ENCODE measurements at regions of chr10 and their contacts with region 1.

Region 1: GRCh38 chr10:80459047-80459931 is 5.2 kb downstream of the TSPAN14 start:
- DNase-seq: peak; percentile 86 to 93
- H3K4me3 ChIP-seq: peak overlapping the region; percentile 51
- H3K27ac ChIP-seq: peak overlapping the region; percentile 82
- H3K4me1 ChIP-seq: peaks cover 85% of the 10 kb centered on the region
- H3K27me3 ChIP-seq: no peaks in the 10 kb centered on the region
- CTCF ChIP-seq: no peak; the same call in 1 of the 2 replicates

Region 2: DNA sequence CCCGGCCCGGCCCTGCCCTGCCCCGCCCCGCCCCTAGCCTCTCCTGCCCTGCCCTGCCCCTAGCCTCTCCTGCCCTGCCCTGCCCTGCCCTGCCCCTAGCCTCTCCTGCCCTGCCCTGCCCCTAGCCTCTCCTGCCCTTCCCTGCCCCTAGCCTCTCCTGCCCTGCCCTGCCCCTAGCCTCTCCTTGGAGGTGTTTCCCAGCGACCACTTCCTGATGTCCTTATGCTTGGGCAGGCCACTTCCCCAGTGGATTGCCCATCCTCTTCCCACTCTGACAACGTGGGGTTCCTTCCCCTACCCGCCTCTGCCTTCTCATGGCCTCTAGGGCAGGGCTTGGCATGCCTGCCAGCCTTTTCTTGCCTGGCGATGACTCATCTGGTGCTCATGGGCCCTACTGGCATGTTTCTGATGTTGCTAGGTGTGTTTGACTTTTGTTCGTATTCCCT is 29.7 kb before region 1 on chr10:
- CTCF ChIA-PET with region 1: interaction called, 4 read pairs
- POLR2A ChIA-PET with region 1: no interaction called
- intact Hi-C with region 1: loop called (anchors 2 kb)
- DNase-seq: peak; percentile 92 to 96
- H3K4me3 ChIP-seq: no peak overlapping the region
- H3K27ac ChIP-seq: peak overlapping the region; percentile 30
- H3K4me1 ChIP-seq: peaks cover 27% of the 10 kb centered on the region
- H3K27me3 ChIP-seq: no peaks in the 10 kb centered on the region
- CTCF ChIP-seq: no peak

Region 3: GRCh38 chr10:80472234-80473095 is 13.2 kb after region 1 on chr10:
- CTCF ChIA-PET with region 1: interaction called, 7 read pairs
- POLR2A ChIA-PET with region 1: interaction called, 3 read pairs
- intact Hi-C with region 1: loop called (anchors 1 kb)
- DNase-seq: peak; percentile 41 to 85
- H3K4me3 ChIP-seq: peak overlapping the region; percentile 7; the same call in 1 of the 2 replicates
- H3K27ac ChIP-seq: peak overlapping the region; percentile 91
- H3K4me1 ChIP-seq: peaks cover 97% of the 10 kb centered on the region
- H3K27me3 ChIP-seq: no peaks in the 10 kb centered on the region
- CTCF ChIP-seq: no peak

Region 4: GRCh38 chr10:80504158-80504811 is 45.0 kb after region 1 on chr10:
- CTCF ChIA-PET with region 1: interaction called, 36 read pairs
- POLR2A ChIA-PET with region 1: interaction called, 3 read pairs
- intact Hi-C with region 1: loop called (anchors 1 kb)
- DNase-seq: peak; percentile 41 to 65
- H3K4me3 ChIP-seq: peak overlapping the region; percentile 8; the same call in 1 of the 2 replicates
- H3K27ac ChIP-seq: peak overlapping the region; percentile 99
- H3K4me1 ChIP-seq: peaks cover 100% of the 10 kb centered on the region
- H3K27me3 ChIP-seq: no peaks in the 10 kb centered on the region
- CTCF ChIP-seq: no peak

Region 5: DNA sequence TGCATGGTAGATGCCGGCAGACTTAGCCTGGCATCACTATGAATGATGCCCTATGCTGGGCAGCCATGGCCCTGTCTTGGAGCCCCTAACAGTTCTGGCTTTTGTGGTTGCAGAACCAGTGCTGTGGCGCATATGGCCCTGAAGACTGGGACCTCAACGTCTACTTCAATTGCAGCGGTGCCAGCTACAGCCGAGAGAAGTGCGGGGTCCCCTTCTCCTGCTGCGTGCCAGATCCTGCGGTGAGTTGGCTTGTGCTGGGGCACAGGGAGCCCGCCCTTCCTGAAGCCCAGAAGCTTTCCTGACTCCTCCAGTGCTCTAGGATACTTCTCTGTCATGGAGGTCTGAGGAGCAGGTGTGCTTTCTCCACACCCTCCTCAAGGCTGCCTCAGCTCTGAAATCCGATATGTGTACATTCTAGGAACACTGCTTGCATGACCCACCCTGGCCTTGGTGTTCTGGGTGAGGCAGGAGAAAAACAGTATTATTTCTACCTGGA is 52.8 kb after region 1 on chr10:
- CTCF ChIA-PET with region 1: interaction called, 8 read pairs
- POLR2A ChIA-PET with region 1: interaction called, 12 read pairs
- intact Hi-C with region 1: no loop called
- DNase-seq: peak in 1 of 2 experiments; percentile 34
- H3K4me3 ChIP-seq: no peak overlapping the region
- H3K27ac ChIP-seq: no peak overlapping the region; the same call in 1 of the 2 replicates
- H3K4me1 ChIP-seq: peaks cover 57% of the 10 kb centered on the region
- H3K27me3 ChIP-seq: no peaks in the 10 kb centered on the region
- CTCF ChIP-seq: no peak

Region 6: GRCh38 chr10:80567291-80567690 is 108.0 kb after region 1 on chr10:
- CTCF ChIA-PET with region 1: no interaction called
- POLR2A ChIA-PET with region 1: no interaction called
- intact Hi-C with region 1: no loop called
- DNase-seq: no peak
- H3K4me3 ChIP-seq: no peak overlapping the region
- H3K27ac ChIP-seq: no peak overlapping the region
- H3K4me1 ChIP-seq: no peaks in the 10 kb centered on the region
- H3K27me3 ChIP-seq: peaks cover 17% of the 10 kb centered on the region
- CTCF ChIP-seq: no peak; the same call in 1 of the 2 replicates

Region 7: DNA sequence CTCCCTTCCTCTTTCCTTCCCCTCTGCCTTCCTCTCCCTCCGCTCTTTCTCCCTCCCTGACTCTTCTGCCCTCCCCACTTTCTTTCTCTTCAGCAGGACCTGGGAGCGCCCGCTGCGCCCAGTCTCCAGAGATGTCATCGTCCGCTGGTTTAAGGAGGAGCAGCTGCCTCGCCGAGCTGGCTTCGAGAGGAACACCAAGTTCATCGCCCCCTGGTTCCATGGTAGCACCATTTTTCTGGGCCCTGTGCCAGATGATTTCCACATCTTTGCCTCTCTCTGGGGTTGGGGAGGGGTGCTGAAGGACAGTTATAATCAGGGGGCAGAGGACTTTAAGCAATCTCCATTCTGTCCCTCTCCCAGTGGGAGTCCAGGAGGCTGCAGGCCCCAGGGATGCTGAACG is 150.0 kb after region 1 on chr10:
- CTCF ChIA-PET with region 1: no interaction called
- POLR2A ChIA-PET with region 1: no interaction called
- intact Hi-C with region 1: no loop called
- DNase-seq: no peak
- H3K4me3 ChIP-seq: no peak overlapping the region
- H3K27ac ChIP-seq: no peak overlapping the region
- H3K4me1 ChIP-seq: no peaks in the 10 kb centered on the region
- H3K27me3 ChIP-seq: peaks cover 13% of the 10 kb centered on the region; the same call in 1 of the 2 replicates
- CTCF ChIP-seq: no peak